MCF 10A (cell line): ENCODE measurements at regions of chr9 and their contacts with region 1.

Region 1: GRCh38 chr9:13033959-13034693 is 245.4 kb downstream of the MPDZ start:
- DNase-seq: peak; percentile 68
- H3K4me3 Mint-ChIP-seq: peak overlapping the region; percentile 30
- H3K27ac Mint-ChIP-seq: no peak overlapping the region
- H3K4me1 Mint-ChIP-seq: peaks cover 16% of the 10 kb centered on the region
- H3K27me3 Mint-ChIP-seq: no peaks in the 10 kb centered on the region
- CTCF ChIP-seq: peak; percentile 83

Region 2: DNA sequence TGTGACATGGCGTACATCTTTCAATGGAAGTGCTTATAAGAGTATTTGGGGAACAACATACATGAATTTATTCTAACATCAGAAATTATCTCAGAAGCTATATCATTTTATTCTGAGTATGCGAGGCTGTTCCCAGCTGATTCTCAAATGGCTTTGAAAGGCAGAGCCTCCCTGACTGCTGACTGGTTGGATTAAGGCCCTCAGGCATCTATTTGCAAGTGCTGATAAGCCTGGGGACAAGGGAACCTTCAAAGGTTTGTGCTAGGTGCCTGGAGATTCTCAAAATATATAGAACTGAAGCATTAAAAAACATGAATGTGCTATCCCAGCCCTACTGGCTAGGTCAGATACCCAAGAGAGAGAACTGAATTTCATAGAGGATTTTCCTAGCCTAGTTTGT is 24.3 kb before region 1 on chr9:
- CTCF ChIA-PET with region 1: interaction called, 13 read pairs
- POLR2A ChIA-PET with region 1: no interaction called
- intact Hi-C with region 1: no loop called
- DNase-seq: no peak
- H3K4me3 Mint-ChIP-seq: no peak overlapping the region
- H3K27ac Mint-ChIP-seq: no peak overlapping the region
- H3K4me1 Mint-ChIP-seq: peaks cover 5% of the 10 kb centered on the region
- H3K27me3 Mint-ChIP-seq: no peaks in the 10 kb centered on the region
- CTCF ChIP-seq: no peak

Region 3: DNA sequence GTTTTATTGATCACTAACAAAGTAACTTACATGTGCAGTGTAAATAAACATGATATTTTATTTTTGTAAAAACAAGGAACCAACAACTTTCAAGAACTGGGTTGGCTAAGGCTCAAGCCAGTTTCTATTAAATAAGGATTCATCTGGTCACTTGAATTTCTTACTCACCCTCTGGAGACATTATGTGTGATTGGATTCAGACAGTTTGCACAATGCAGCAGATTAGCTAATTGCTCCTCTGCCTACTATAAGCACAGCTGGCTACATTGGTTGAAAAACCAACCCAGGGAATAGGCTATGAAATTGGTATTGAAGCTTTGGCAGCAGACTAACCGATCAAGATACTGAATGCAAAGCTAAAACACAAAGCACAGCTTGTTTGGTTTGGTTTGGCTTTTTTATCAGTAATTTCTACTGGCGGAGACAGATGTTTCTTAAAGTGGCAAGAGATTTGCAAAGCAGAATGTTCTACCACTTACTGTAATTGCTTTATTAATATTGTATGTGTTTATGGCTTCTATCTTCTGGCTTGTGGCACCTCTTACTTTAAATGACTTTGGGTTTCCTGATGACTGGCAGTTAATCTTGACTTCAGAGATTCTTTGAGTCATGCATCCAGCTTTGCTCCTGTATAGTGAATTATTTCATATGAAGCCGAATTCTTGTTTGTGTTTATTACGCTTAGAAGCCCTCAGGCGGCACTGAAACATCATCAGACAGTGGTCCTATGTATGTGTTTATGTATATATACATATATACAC is 13.9 kb after region 1 on chr9:
- CTCF ChIA-PET with region 1: interaction called, 12 read pairs
- POLR2A ChIA-PET with region 1: no interaction called
- intact Hi-C with region 1: no loop called
- DNase-seq: no peak
- H3K4me3 Mint-ChIP-seq: no peak overlapping the region
- H3K27ac Mint-ChIP-seq: no peak overlapping the region
- H3K4me1 Mint-ChIP-seq: peaks cover 2% of the 10 kb centered on the region
- H3K27me3 Mint-ChIP-seq: no peaks in the 10 kb centered on the region
- CTCF ChIP-seq: no peak

Region 4: DNA sequence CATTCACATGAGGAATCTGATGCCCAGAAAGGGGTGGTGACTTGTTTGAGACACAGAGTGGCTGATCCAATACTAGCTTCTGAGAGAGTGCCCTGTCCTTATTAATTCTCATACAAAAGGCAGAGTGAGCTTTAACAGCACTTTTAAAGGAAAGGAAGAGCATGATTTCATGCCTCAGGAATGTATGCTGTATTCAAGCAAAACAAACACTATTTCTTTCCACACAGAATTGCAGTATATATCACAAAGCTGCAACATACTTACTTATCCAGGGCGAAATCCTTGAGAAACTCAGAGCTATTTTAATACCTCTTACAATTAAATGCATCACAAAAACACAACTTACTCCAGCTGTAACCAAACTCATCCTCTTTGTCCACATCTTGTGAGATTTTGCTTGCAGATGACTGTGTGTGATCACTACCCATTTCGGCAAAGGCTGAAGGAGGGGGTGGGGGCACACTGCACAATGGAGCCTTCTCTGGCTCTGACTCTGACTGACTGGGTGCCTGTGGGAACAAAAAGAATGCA is 105.6 kb after region 1 on chr9:
- CTCF ChIA-PET with region 1: no interaction called
- POLR2A ChIA-PET with region 1: no interaction called
- intact Hi-C with region 1: no loop called
- DNase-seq: peak; percentile 62
- H3K4me3 Mint-ChIP-seq: peak overlapping the region; percentile 17
- H3K27ac Mint-ChIP-seq: peak overlapping the region; percentile 42
- H3K4me1 Mint-ChIP-seq: peaks cover 10% of the 10 kb centered on the region
- H3K27me3 Mint-ChIP-seq: no peaks in the 10 kb centered on the region
- CTCF ChIP-seq: no peak